ENCODE measurements at regions of chr6 and their contacts with region 1.

Region 1: DNA sequence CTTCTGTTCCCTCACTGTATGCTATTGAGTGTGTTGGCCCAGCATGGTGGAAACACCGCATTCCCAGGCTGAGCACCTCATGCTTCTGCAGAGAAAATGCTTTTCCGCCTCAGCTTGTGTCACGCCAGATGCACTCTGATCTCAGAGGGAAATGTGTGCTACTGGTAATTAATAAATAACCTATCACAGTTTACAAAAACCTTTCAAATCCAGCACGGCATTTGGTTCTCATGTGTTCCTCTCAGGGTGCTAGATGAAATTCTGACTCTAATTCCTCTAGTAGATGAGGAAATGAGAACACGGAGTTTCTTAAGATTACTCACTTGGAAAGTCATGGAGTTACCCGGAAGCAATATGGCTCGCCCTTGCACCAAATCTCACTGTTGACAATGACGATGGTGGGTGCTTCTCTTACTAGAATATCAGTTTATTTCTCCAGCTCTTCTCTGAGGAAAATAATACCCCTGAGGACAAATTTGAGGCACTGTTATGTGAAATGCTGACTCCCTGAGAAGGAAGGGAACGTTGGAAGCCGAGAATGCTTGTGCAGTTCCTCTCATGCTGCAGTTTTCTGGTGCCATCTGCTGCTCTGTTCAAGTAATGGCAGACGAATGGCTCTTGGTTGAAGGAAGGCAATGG is 116.6 kb downstream of the RNF144B start:
- H3K4me3 ChIP-seq: peak overlapping the region; percentile 14
- H3K27ac ChIP-seq: no peak overlapping the region
- H3K4me1 ChIP-seq: no peaks in the 10 kb centered on the region
- CTCF ChIP-seq: peak; percentile 91

Region 2: GRCh38 chr6:18317850-18318249 is 185.9 kb before region 1 on chr6:
- CTCF ChIA-PET with region 1: interaction called, 252 read pairs
- POLR2A ChIA-PET with region 1: no interaction called
- H3K4me3 ChIP-seq: no peak overlapping the region
- H3K27ac ChIP-seq: no peak overlapping the region
- H3K4me1 ChIP-seq: no peaks in the 10 kb centered on the region
- CTCF ChIP-seq: no peak

Region 3: GRCh38 chr6:18323935-18324705 is 179.6 kb before region 1 on chr6:
- CTCF ChIA-PET with region 1: interaction called, 252 read pairs
- POLR2A ChIA-PET with region 1: no interaction called
- H3K4me3 ChIP-seq: no peak overlapping the region
- H3K27ac ChIP-seq: no peak overlapping the region
- H3K4me1 ChIP-seq: peaks cover 4% of the 10 kb centered on the region; the same call in 1 of the 2 replicates
- CTCF ChIP-seq: no peak

Region 4: DNA sequence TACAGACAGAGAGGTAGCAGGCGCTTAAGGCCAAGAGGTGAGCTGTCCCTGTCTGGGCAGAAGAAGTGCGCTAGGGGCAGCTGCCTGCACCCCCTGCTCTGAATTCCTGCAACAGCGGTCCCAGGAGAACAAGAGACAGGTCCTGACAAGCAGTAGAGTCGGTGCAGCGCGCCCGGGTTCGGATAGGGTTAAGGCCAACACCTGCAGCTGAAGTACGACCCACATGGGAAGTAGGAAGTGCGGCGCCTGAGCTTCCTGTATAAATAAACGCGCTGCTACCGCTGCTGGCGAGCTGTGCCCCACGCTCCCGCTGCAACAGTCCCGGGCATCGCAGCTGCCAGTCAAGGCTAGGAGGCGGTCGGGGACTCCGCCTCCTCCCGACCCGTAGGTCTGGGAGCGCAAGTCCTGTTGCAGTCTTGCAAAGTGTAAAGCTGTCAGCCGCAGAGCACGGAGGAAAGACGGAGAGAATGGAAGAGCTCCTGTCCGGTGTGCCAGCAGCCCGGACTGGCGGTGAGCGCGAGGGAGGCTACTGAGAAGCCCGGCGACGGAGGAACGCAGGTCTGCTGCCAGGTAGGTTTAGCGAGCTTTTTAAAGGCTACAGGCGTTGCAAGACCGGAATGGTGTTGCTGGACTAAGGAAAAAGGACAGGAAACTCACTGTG is 116.5 kb before region 1 on chr6 and contains the start of gene RNF144B:
- CTCF ChIA-PET with region 1: interaction called, 13 read pairs
- POLR2A ChIA-PET with region 1: no interaction called
- H3K4me3 ChIP-seq: peak within 1 kb of the TSS; percentile 69
- H3K27ac ChIP-seq: peak within 1 kb of the TSS; percentile 47
- H3K4me1 ChIP-seq: peaks cover 3% of the 10 kb centered on the region; the same call in 1 of the 2 replicates
- CTCF ChIP-seq: peak; percentile 16; the same call in 1 of the 2 replicates

Region 5: GRCh38 chr6:18477301-18477941 is 26.3 kb before region 1 on chr6:
- CTCF ChIA-PET with region 1: interaction called, 11 read pairs
- POLR2A ChIA-PET with region 1: no interaction called
- H3K4me3 ChIP-seq: no peak overlapping the region
- H3K27ac ChIP-seq: no peak overlapping the region
- H3K4me1 ChIP-seq: 0 out of 2 replicates have a peak, but pooled peaks cover 3% of the 10 kb centered on the region
- CTCF ChIP-seq: no peak

Region 6: GRCh38 chr6:18488526-18489270 is 15.0 kb before region 1 on chr6:
- CTCF ChIA-PET with region 1: interaction called, 17 read pairs
- POLR2A ChIA-PET with region 1: no interaction called
- H3K4me3 ChIP-seq: no peak overlapping the region
- H3K27ac ChIP-seq: no peak overlapping the region
- H3K4me1 ChIP-seq: no peaks in the 10 kb centered on the region
- CTCF ChIP-seq: no peak

Region 7: DNA sequence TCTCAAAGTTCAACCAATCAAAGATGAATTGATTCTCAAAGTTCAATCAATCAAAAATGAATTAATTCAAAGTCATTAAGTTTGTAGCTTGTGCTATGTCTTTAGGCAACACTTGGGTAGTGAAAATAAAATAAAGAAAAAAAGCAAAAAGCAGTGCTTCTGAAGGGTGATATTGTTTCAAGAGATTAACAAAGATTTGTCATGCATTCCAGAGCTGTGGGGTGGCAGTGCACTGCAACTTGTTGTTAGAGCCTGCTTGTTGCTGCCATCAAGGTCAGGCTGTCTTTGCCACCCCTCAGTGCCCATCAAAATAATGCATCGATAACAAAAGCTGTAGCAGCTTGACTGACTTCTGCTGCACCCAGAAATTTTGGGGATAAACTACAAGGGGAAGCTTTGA is 12.1 kb after region 1 on chr6:
- CTCF ChIA-PET with region 1: interaction called, 14 read pairs
- POLR2A ChIA-PET with region 1: no interaction called
- H3K4me3 ChIP-seq: no peak overlapping the region
- H3K27ac ChIP-seq: no peak overlapping the region
- H3K4me1 ChIP-seq: no peaks in the 10 kb centered on the region
- CTCF ChIP-seq: no peak

Measured in HEK293 (cell line).